ENCODE measurements at regions of chr12 and their contacts with region 1.

Region 1: DNA sequence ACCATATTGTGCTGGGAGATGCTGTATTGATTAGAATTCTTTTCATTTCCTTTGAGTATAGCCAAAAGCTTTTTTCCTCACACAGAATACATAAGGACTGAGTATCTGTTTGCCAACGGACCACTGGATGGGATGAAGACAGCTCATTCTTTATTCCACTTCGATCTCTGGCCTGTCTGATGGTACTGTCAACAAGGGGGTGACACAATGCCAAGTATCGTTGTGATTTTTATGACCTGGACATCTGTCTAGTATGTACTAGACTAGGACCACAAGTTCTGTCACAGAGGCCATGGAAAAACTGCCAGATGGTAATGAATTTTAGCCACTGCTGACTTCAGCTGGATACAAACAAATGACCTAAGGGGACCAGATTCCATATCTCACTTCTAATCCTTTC is 502.7 kb downstream of the SOX5 start:
- DNase-seq: no peak
- ATAC-seq: no peak
- H3K4me3 ChIP-seq: no peak overlapping the region
- H3K4me3 Mint-ChIP-seq: no peak overlapping the region
- H3K27ac ChIP-seq: no peak overlapping the region
- H3K27ac Mint-ChIP-seq: no peak overlapping the region
- H3K4me1 ChIP-seq: no peaks in the 10 kb centered on the region
- H3K4me1 Mint-ChIP-seq: no peaks in the 10 kb centered on the region
- H3K27me3 ChIP-seq: no peaks in the 10 kb centered on the region
- H3K27me3 Mint-ChIP-seq: no peaks in the 10 kb centered on the region
- CTCF ChIP-seq: no peak

Region 2: DNA sequence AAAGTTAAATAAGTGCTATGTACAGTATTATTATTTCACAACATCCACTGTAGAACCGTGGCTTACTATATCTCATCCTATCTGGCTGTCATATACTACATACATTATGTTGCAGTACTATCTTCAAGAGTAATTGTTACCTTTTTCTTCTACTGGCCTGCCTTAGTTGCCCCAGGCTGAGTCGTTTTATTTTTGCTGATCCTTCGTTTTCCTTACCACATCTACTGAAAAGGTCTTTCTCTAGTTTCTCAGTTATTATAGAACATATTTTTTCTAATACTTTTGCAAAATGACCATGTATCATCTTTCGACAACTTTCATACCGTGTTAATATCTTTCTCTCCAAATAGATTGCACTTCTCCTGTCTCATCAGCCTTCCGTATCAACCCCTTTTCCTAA is 20.4 kb before region 1 on chr12:
- intact Hi-C with region 1: loop called (anchors 2 kb)
- DNase-seq: no peak
- ATAC-seq: no peak
- H3K4me3 ChIP-seq: no peak overlapping the region
- H3K4me3 Mint-ChIP-seq: no peak overlapping the region
- H3K27ac ChIP-seq: no peak overlapping the region
- H3K27ac Mint-ChIP-seq: no peak overlapping the region
- H3K4me1 ChIP-seq: no peaks in the 10 kb centered on the region
- H3K4me1 Mint-ChIP-seq: no peaks in the 10 kb centered on the region
- H3K27me3 ChIP-seq: no peaks in the 10 kb centered on the region
- H3K27me3 Mint-ChIP-seq: no peaks in the 10 kb centered on the region
- CTCF ChIP-seq: no peak

Region 3: DNA sequence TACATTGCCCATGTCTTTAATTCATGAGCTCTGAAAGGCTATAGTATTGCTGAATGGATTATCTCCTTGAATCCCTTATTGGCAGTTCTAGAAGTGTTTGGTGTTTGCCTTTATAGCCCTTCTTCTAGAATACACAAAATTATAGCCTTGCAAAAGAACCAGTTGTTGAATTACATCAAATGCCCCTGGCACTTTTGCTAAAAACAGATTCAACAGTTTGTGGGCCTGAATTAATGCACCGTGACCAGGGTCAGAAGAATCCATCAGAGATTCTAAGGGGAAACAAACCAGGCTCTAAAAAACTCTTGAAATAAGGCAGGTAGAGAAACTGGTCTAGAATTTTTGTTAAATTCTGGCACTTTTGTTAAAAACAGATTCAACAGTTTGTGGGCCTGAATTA is 304.9 kb after region 1 on chr12:
- intact Hi-C with region 1: no loop called
- DNase-seq: no peak
- ATAC-seq: no peak
- H3K4me3 ChIP-seq: no peak overlapping the region
- H3K4me3 Mint-ChIP-seq: no peak overlapping the region
- H3K27ac ChIP-seq: no peak overlapping the region
- H3K27ac Mint-ChIP-seq: no peak overlapping the region
- H3K4me1 ChIP-seq: no peaks in the 10 kb centered on the region
- H3K4me1 Mint-ChIP-seq: no peaks in the 10 kb centered on the region
- H3K27me3 ChIP-seq: no peaks in the 10 kb centered on the region
- H3K27me3 Mint-ChIP-seq: no peaks in the 10 kb centered on the region
- CTCF ChIP-seq: no peak